Caco-2 (cell line): ENCODE measurements at regions of chr2 and their contacts with region 1.

Region 1: GRCh38 chr2:156892467-156893281 is 364.8 kb upstream of the GALNT5 start:
- DNase-seq: peak in 1 of 2 experiments; percentile 55
- H3K4me3 ChIP-seq: peak overlapping the region; percentile 36
- H3K4me3 Mint-ChIP-seq: peak overlapping the region; percentile 66
- H3K27ac Mint-ChIP-seq: no peak overlapping the region
- H3K4me1 ChIP-seq: no peaks in the 10 kb centered on the region
- H3K4me1 Mint-ChIP-seq: peaks cover 10% of the 10 kb centered on the region
- H3K27me3 ChIP-seq: no peaks in the 10 kb centered on the region
- H3K27me3 Mint-ChIP-seq: peaks cover 2% of the 10 kb centered on the region
- CTCF ChIP-seq: peak; percentile 58 to 71

Region 2: DNA sequence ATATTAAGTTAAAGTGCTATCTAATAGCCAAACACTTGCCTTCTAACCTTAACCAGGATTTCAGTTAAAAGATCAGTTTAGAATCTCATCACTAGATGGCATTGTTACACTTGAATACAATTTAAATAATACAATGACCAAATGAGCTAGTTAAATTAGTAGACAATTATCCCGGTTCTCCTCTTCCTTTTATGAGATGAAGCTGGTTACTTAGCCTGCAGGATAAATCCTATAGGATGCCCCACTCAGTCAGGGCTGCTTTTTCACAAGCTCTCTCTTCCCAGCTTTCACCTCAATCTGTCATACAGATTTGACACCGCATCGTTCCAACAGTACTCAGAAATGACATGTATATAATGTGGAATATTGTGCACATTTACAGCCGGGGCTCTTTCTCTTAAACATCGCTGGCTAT is 1515.4 kb before region 1 on chr2:
- CTCF ChIA-PET with region 1: no interaction called
- POLR2A ChIA-PET with region 1: no interaction called
- intact Hi-C with region 1: loop called (anchors 2 kb)
- DNase-seq: no peak
- H3K4me3 ChIP-seq: no peak overlapping the region
- H3K4me3 Mint-ChIP-seq: no peak overlapping the region
- H3K27ac Mint-ChIP-seq: no peak overlapping the region
- H3K4me1 ChIP-seq: no peaks in the 10 kb centered on the region
- H3K4me1 Mint-ChIP-seq: no peaks in the 10 kb centered on the region
- H3K27me3 ChIP-seq: no peaks in the 10 kb centered on the region
- H3K27me3 Mint-ChIP-seq: no peaks in the 10 kb centered on the region
- CTCF ChIP-seq: peak; percentile 6 to 27

Region 3: DNA sequence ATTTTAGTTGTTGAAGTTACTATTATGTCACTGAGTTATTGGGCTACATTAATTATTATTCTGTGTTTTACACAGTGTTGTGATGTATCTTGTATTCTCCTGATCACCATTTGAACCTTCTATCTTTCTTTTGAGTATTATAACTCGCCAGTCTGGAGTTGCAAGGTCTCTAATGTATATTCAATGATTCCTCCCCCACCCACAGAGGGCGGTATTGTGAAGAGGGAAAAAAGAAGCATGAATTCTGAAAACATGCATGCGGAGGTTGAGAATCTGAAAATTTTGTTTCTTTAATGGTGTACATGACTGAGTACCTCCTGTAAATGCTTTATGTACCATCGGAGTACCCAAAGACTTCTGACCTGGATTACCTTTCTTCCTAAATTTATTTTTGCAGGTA is 826.8 kb before region 1 on chr2:
- CTCF ChIA-PET with region 1: no interaction called
- POLR2A ChIA-PET with region 1: no interaction called
- intact Hi-C with region 1: loop called (anchors 5 kb)
- DNase-seq: peak in 1 of 2 experiments; percentile 36
- H3K4me3 ChIP-seq: no peak overlapping the region
- H3K4me3 Mint-ChIP-seq: no peak overlapping the region
- H3K27ac Mint-ChIP-seq: no peak overlapping the region
- H3K4me1 ChIP-seq: no peaks in the 10 kb centered on the region
- H3K4me1 Mint-ChIP-seq: no peaks in the 10 kb centered on the region
- H3K27me3 ChIP-seq: no peaks in the 10 kb centered on the region
- H3K27me3 Mint-ChIP-seq: no peaks in the 10 kb centered on the region
- CTCF ChIP-seq: peak; percentile 39 to 49

Region 4: GRCh38 chr2:156400706-156401678 is 491.7 kb before region 1 on chr2:
- CTCF ChIA-PET with region 1: no interaction called
- POLR2A ChIA-PET with region 1: no interaction called
- intact Hi-C with region 1: loop called (anchors 5 kb)
- DNase-seq: peak; percentile 63 to 82
- H3K4me3 ChIP-seq: peak overlapping the region; percentile 74
- H3K4me3 Mint-ChIP-seq: peak overlapping the region; percentile 88
- H3K27ac Mint-ChIP-seq: peak overlapping the region; percentile 97
- H3K4me1 ChIP-seq: peaks cover 16% of the 10 kb centered on the region; the same call in 1 of the 2 replicates
- H3K4me1 Mint-ChIP-seq: peaks cover 48% of the 10 kb centered on the region
- H3K27me3 ChIP-seq: no peaks in the 10 kb centered on the region
- H3K27me3 Mint-ChIP-seq: peaks cover 8% of the 10 kb centered on the region
- CTCF ChIP-seq: no peak

Region 5: GRCh38 chr2:156745619-156746018 is 147.1 kb before region 1 on chr2:
- CTCF ChIA-PET with region 1: no interaction called
- POLR2A ChIA-PET with region 1: no interaction called
- intact Hi-C with region 1: loop called (anchors 1 kb)
- DNase-seq: no peak
- H3K4me3 ChIP-seq: no peak overlapping the region
- H3K4me3 Mint-ChIP-seq: no peak overlapping the region
- H3K27ac Mint-ChIP-seq: no peak overlapping the region
- H3K4me1 ChIP-seq: no peaks in the 10 kb centered on the region
- H3K4me1 Mint-ChIP-seq: peaks cover 6% of the 10 kb centered on the region
- H3K27me3 ChIP-seq: no peaks in the 10 kb centered on the region
- H3K27me3 Mint-ChIP-seq: no peaks in the 10 kb centered on the region
- CTCF ChIP-seq: no peak

Region 6: DNA sequence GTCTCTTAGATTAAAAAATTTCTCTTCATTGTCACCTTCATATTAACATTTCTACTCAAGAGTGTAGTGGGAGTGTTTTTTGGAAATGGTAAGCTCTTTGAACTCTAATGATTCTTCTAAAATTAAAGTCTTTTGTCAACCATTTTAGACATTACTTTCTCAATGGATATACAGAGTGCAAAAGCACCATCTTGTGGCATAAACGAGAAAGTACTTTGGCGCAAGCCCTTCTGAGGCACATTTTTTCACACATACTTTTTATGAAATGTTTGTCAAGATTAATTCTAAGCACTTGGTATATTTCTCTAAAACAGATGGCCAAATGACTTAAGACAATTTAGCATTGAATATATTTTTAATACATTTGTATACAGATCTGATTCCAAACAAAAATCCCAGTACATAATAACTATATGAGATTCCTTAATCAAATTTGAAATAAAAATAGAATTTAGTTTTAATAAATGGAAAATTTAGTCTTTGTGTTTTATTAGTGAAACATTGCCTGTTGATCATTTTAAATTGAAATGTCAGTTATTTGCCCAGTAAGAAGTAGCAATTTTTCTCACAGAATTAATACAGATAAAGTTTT is 301.5 kb after region 1 on chr2:
- CTCF ChIA-PET with region 1: no interaction called
- POLR2A ChIA-PET with region 1: no interaction called
- intact Hi-C with region 1: loop called (anchors 1 kb)
- DNase-seq: peak in 1 of 2 experiments; percentile 43
- H3K4me3 ChIP-seq: no peak overlapping the region
- H3K4me3 Mint-ChIP-seq: no peak overlapping the region
- H3K27ac Mint-ChIP-seq: no peak overlapping the region
- H3K4me1 ChIP-seq: no peaks in the 10 kb centered on the region
- H3K4me1 Mint-ChIP-seq: no peaks in the 10 kb centered on the region
- H3K27me3 ChIP-seq: no peaks in the 10 kb centered on the region
- H3K27me3 Mint-ChIP-seq: peaks cover 5% of the 10 kb centered on the region
- CTCF ChIP-seq: peak; percentile 61 to 63

Region 7: GRCh38 chr2:157404363-157404762 is 511.7 kb after region 1 on chr2:
- CTCF ChIA-PET with region 1: no interaction called
- POLR2A ChIA-PET with region 1: no interaction called
- intact Hi-C with region 1: no loop called
- DNase-seq: no peak
- H3K4me3 ChIP-seq: no peak overlapping the region
- H3K4me3 Mint-ChIP-seq: no peak overlapping the region
- H3K27ac Mint-ChIP-seq: no peak overlapping the region
- H3K4me1 ChIP-seq: peaks cover 5% of the 10 kb centered on the region; the same call in 1 of the 2 replicates
- H3K4me1 Mint-ChIP-seq: no peaks in the 10 kb centered on the region
- H3K27me3 ChIP-seq: no peaks in the 10 kb centered on the region
- H3K27me3 Mint-ChIP-seq: no peaks in the 10 kb centered on the region
- CTCF ChIP-seq: no peak

Region 8: GRCh38 chr2:158610059-158610458 is 1717.4 kb after region 1 on chr2:
- CTCF ChIA-PET with region 1: no interaction called
- POLR2A ChIA-PET with region 1: no interaction called
- intact Hi-C with region 1: no loop called
- DNase-seq: no peak
- H3K4me3 ChIP-seq: no peak overlapping the region
- H3K4me3 Mint-ChIP-seq: no peak overlapping the region
- H3K27ac Mint-ChIP-seq: no peak overlapping the region
- H3K4me1 ChIP-seq: no peaks in the 10 kb centered on the region
- H3K4me1 Mint-ChIP-seq: no peaks in the 10 kb centered on the region
- H3K27me3 ChIP-seq: no peaks in the 10 kb centered on the region
- H3K27me3 Mint-ChIP-seq: no peaks in the 10 kb centered on the region
- CTCF ChIP-seq: no peak